ENCODE measurements at regions of chr2 and their contacts with region 1.

Region 1: GRCh38 chr2:235669269-235669831 is 175.5 kb downstream of the AGAP1 start:
- DNase-seq: peak; percentile 76 to 89 (median 87)
- ATAC-seq: peak; percentile 69 to 78
- H3K4me3 ChIP-seq: peak overlapping the region; percentile 85
- H3K27ac ChIP-seq: no peak overlapping the region
- H3K4me1 ChIP-seq: peaks cover 1% of the 10 kb centered on the region
- H3K27me3 ChIP-seq: no peaks in the 10 kb centered on the region

Region 2: DNA sequence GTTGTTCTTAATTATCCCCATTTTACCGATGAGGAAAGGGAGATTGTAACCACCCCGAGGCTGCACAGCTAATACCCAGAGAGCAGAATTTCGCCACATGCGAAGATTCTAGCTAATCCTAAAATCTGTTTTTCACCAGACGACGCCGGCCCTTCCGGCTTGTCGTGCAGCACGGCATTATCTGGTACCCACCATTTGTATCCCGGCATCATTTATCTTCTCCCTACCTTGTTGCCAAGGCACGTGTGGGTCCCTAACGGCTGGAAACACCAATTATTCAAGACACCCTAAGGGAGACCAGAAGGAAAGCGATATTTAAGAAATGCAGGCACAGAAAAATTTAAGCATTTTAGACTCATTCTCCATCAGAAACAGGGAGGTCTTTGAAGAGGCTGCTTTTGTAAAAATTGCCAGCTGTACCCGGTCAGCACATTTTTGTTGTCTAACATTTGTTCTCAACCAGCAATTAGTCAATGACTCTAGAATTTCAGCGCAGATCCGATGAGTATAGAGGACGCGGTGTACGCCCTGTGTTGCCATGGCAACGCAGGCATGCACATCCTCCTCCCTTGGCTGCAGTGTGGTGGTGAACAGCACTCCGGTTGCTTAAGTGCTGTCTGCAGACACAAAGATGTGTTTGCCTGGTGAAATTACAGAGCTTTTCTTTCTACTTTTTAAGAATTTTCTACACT is 63.9 kb before region 1 on chr2:
- intact Hi-C with region 1: loop called in 1 of 4 experiments (anchors 5 kb)
- DNase-seq: peak; percentile 90 to 95 (median 91)
- ATAC-seq: peak; percentile 90 to 94
- H3K4me3 ChIP-seq: no peak overlapping the region
- H3K27ac ChIP-seq: peak overlapping the region; percentile 66
- H3K4me1 ChIP-seq: peaks cover 3% of the 10 kb centered on the region
- H3K27me3 ChIP-seq: no peaks in the 10 kb centered on the region

Region 3: DNA sequence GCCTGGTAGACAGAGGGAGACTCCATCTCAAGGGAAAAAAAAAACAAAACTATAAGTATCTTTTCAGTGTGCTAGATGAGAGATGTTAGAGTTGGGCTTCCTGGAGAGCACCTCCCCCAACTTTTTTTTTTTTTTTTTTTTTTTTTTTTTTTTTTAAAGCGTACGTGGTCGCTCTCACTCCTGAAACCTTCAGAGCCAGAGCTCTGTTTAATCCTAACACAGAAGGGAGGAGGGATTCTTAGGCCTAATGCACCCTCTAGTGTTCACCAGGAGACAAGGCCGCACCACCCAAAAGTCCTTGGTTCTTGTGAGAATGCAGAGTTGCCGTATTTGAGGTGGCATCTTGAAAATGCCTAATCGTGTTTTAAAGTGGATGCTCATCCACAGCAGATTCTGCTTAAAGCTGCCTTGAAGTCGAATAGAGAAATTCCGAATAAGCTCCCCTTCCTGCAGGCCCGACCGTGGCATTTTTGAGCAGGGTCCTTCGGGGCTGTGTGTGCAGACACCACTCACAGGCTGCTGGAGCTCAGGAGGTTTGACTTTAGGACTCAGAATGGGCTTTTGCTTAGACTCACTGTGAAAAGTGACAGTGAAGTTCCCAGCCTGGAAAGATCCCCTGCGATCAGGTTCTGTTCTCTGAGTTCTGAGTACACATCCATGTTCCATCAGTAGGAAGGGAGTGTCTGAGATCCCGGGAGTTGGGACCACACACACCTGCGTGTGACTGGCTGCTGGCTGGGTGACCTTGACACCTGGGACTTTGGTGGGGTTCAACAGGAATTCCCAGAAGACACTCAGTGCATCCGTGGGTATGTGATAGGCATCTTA is 77.1 kb after region 1 on chr2:
- intact Hi-C with region 1: loop called in 1 of 4 experiments (anchors 10 kb)
- DNase-seq: peak; percentile 47 to 78 (median 62)
- ATAC-seq: peak; percentile 91
- H3K4me3 ChIP-seq: no peak overlapping the region
- H3K27ac ChIP-seq: no peak overlapping the region
- H3K4me1 ChIP-seq: no peaks in the 10 kb centered on the region
- H3K27me3 ChIP-seq: no peaks in the 10 kb centered on the region